HepG2 (cell line): ENCODE measurements at regions of chr2 and their contacts with region 1.

Region 1: DNA sequence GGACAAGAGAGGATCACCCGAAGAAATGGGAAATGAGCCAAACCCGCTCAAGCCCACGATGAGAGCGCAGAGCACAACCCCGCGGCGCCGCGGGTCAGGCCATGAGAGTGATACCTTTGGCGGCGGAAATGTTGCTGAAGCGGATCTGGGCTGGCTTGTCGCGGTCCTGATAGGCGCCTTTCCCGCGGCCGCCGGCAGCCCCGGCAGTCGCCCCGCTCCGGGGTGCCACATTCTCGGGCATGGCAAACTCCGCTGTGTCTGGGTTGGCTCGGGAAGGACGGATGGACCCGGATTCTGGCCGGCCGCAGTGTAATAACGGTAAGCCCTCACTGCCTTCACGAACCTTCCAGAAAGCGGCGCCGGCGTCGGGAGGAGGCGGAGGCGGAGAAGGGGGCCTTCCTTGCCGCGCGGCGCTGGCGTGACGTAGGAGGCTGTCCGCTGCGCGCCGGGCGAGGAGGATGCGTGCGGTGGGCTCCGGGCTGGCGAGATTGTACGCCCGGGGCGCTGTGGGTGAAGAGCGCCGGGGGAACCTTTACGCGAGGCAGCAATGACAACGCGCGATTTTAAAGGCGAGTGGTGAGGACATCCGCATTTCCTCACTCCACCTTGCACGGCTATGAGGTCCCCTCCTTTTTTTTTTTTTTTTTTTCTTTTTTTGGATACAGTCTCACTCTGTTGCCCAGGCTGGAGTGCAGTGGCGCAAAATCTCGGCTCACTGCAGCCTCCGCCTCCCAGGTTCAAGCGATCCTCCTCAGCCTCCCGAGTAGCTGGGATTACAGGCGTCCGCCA is at the start of gene CCT4:
- DNase-seq: peak; percentile 83
- ATAC-seq: peak; percentile 88
- H3K4me3 ChIP-seq: peak within 1 kb of the TSS; percentile 78 to 99 (median 98)
- H3K27ac ChIP-seq: peak within 1 kb of the TSS; percentile 92
- H3K4me1 ChIP-seq: peaks cover 32% of the 10 kb centered on the region
- H3K27me3 ChIP-seq: no peaks in the 10 kb centered on the region; a peak in 1 of 5 replicates
- CTCF ChIP-seq: peak; percentile 53
- EP300 ChIP-seq: peak in 1 of 2 experiments; percentile 85; a peak in 2 of 4 replicates
- POLR2A ChIP-seq: peak; percentile 96 to 98
- RAD21 ChIP-seq: peak; percentile 64
- total RNA-seq, gene CCT4: 340 and 437 TPM in 2 replicates

Region 2: DNA sequence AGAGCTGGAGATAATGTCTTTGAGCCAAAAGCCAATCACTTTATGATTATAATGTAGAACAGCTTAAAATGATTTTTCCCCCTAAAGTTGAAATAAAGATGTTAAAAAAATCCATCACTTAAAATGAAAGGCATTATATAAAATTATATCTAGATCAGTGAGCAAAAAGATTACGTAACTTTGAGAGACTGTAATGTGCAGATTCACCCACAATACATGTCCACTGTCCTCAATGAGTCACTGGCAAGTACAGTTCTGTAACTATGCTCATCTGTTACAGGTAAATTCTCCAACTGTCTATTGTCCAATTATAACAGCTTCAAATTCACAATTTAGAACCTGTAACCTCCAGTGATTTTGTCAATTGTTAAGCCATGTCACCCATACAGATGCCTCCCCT is 53.6 kb before region 1 on chr2:
- CTCF ChIA-PET with region 1: no interaction called
- POLR2A ChIA-PET with region 1: no interaction called
- in situ Hi-C with region 1: no loop called
- intact Hi-C with region 1: no loop called
- DNase-seq: no peak
- ATAC-seq: no peak
- H3K4me3 ChIP-seq: no peak overlapping the region
- H3K27ac ChIP-seq: no peak overlapping the region
- H3K4me1 ChIP-seq: no peaks in the 10 kb centered on the region
- H3K27me3 ChIP-seq: no peaks in the 10 kb centered on the region
- CTCF ChIP-seq: no peak
- EP300 ChIP-seq: no peak
- POLR2A ChIP-seq: no peak
- RAD21 ChIP-seq: no peak

Region 3: GRCh38 chr2:61854474-61855182 is 33.8 kb before region 1 on chr2:
- CTCF ChIA-PET with region 1: no interaction called
- POLR2A ChIA-PET with region 1: interaction called, 9 read pairs
- in situ Hi-C with region 1: no loop called
- intact Hi-C with region 1: loop called (anchors 2 kb)
- DNase-seq: peak; percentile 100
- ATAC-seq: peak; percentile 90
- H3K4me3 ChIP-seq: peak overlapping the region; percentile 61 to 93 (median 82)
- H3K27ac ChIP-seq: peak overlapping the region; percentile 87
- H3K4me1 ChIP-seq: peaks cover 19% of the 10 kb centered on the region
- H3K27me3 ChIP-seq: no peaks in the 10 kb centered on the region; a peak in 1 of 5 replicates
- CTCF ChIP-seq: no peak; the same call in 1 of the 2 replicates
- EP300 ChIP-seq: no peak
- POLR2A ChIP-seq: peak; percentile 85 to 92
- RAD21 ChIP-seq: no peak; the same call in 1 of the 2 replicates